CD4-positive, alpha-beta memory T cell (primary cell): ENCODE measurements at regions of chr6 and their contacts with region 1.

Region 1: DNA sequence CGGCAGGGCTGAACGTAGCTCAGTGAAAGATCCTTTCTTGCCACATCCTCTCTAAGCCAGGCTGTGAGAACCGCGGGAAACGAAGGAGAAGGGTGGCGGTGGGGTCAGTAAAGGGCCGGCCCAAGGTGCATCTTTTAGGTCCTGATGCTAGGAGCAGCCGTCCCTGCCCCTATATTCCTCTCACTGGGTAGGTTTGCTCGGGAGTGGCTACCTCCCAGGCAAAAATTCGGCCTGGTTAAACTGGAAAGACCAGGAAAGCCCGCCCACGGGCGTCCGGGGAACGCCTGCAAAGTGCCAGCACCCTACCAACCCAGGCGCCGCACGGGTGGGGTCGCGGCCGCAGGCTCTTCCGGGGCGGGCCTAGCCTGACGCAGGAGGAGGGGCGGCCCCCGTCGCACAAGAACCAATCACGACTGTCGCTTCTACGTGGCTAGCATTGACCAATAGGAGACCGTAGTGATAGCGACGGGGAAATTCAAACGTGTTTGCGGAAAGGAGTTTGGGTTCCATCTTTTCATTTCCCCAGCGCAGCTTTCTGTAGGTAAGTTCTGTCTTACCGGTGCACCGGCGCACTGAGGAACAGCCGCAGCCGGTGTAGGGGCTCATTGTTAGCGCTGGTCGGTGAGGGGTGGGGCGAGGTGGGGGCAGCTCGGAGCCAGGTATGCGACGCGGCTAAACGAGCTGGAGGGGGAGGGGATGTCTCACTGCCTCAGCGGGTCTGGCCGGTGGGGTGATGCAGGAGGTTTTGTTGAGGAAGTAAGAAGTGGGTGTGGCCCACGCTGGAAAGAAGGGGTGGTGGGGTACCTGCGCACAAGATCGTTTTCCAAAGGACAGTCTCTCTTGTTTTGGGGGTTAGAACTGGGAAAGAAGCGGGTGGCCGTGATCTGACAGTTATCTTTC is at the start of gene TTK:
- DNase-seq: peak; percentile 93 to 96 (median 94)
- H3K4me3 ChIP-seq: peak within 1 kb of the TSS; percentile 42 to 95
- H3K4me3 Mint-ChIP-seq: peak within 1 kb of the TSS; percentile 88 to 97 (median 94)
- H3K27ac ChIP-seq: peak within 1 kb of the TSS; percentile 81
- H3K27ac Mint-ChIP-seq: peak within 1 kb of the TSS; percentile 89 to 99 (median 98)
- H3K4me1 ChIP-seq: peaks cover 25% of the 10 kb centered on the region
- H3K4me1 Mint-ChIP-seq: peaks cover 15 to 25% (median 20%) of the 10 kb centered on the region in 4 donors
- H3K27me3 ChIP-seq: no peaks in the 10 kb centered on the region
- H3K27me3 Mint-ChIP-seq: peaks cover 2 to 3% of the 10 kb centered on the region in 2 donors
- total RNA-seq, gene TTK: 0.61 to 0.87 TPM

Region 2: DNA sequence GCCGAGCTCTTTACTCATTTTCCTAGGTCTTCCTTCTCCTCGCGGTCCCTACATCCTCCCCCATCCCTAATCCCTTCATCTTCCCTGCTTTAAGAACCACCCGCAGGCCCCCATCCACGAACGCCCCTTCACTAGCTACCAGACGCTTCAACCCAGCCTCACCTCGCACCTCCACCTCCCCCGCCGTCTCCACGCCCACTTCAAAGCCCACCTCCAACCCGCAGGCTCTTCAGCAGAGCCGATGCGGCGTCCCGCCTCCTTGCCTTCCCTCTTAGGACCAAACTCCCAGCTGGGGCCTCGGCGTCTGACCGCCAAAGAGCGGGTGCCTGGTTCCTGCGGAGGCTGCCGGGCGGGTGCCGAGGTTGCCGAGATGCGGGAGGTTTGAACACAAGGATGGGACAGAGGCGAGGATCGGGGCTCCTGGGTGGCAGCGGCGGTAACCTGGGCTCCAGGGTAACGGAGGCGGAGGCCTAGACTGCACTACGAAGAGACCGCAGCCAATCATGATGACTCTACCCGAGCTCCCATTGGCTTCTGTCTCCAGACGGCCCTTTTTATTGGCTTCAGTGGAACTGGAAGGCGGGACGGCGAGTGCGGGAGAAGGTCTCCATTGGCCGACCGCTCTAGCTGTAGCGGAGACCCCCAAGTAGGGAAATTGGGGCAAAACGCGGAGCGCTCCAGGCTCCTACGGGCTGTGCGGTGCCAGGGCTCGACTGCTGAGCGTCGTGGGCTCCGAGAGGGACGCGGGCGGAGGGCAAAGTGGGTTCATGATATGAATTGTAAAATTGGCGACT is 467.3 kb before region 1 on chr6 and contains the start of gene LCA5:
- CTCF ChIA-PET with region 1: no interaction called
- POLR2A ChIA-PET with region 1: no interaction called
- intact Hi-C with region 1: loop called (anchors 5 kb)
- DNase-seq: peak; percentile 73 to 85 (median 84)
- H3K4me3 ChIP-seq: peak within 1 kb of the TSS; percentile 25 to 44
- H3K4me3 Mint-ChIP-seq: no peak within 1 kb of the TSS
- H3K27ac ChIP-seq: no peak within 1 kb of the TSS
- H3K27ac Mint-ChIP-seq: no peak within 1 kb of the TSS
- H3K4me1 ChIP-seq: peaks cover 14% of the 10 kb centered on the region
- H3K4me1 Mint-ChIP-seq: peaks cover 0 to 4% (median under 1%) of the 10 kb centered on the region in 4 donors
- H3K27me3 ChIP-seq: no peaks in the 10 kb centered on the region
- H3K27me3 Mint-ChIP-seq: peaks cover 11 to 18% of the 10 kb centered on the region in 2 donors
- total RNA-seq, gene LCA5: 0.22 to 0.23 TPM

Region 3: DNA sequence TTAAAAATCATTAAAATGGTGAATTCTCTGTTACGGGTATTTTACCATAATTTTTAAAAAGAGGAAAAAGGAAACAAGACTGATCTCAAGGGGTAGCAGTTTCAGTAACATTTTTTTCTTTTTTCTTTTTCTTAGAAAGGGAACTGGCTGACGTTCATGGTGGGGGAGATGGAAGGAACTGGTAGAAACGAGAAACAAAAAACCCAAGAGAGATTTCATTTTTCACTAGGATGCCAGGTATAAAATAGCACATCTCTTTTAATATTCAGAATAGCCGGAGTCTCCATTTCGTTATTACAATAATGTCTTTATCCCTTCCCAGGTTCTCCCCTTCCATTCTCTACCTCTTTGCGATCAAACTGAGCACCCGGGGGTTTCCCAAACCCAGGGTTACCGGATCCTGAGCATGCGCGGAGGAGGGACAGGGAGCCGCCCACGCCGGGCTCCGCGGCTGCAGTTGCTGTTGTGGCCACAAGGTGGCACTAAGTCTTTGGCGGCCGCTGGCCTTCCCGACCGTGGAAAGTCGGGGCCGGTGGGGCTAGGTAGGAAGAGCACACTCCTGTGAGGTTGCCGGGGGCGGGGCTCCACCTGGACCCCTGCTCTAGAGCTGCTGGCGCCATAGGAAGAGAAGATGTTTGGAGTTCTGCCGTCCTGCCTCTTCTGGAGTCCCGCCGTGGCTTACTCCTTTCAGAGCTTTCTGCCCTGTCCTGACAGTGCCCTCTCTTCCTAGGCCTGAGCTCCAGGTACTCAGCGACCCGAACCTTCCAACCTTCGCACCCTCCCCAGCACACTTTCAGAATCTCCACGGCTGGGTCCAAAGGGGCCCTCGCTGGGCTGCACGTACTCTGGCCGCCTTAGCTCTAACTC is 226.5 kb before region 1 on chr6:
- CTCF ChIA-PET with region 1: no interaction called
- POLR2A ChIA-PET with region 1: no interaction called
- intact Hi-C with region 1: loop called (anchors 5 kb)
- DNase-seq: peak; percentile 79 to 82 (median 81)
- H3K4me3 ChIP-seq: peak overlapping the region; percentile 11 to 67
- H3K4me3 Mint-ChIP-seq: peak overlapping the region; percentile 79 to 87 (median 80)
- H3K27ac ChIP-seq: no peak overlapping the region
- H3K27ac Mint-ChIP-seq: peak overlapping the region in 6 of 7 donors; percentile 23 to 65 (median 58)
- H3K4me1 ChIP-seq: peaks cover 7% of the 10 kb centered on the region
- H3K4me1 Mint-ChIP-seq: peaks cover 4 to 11% (median 8%) of the 10 kb centered on the region in 4 donors
- H3K27me3 ChIP-seq: no peaks in the 10 kb centered on the region
- H3K27me3 Mint-ChIP-seq: no peaks in the 10 kb centered on the region

Region 4: GRCh38 chr6:79984261-79984660 is 20.2 kb before region 1 on chr6:
- CTCF ChIA-PET with region 1: interaction called, 4 read pairs
- POLR2A ChIA-PET with region 1: interaction called, 18 read pairs
- intact Hi-C with region 1: loop called (anchors 1 kb)
- DNase-seq: peak; percentile 28 to 50 (median 43)
- H3K4me3 ChIP-seq: no peak overlapping the region
- H3K4me3 Mint-ChIP-seq: peak overlapping the region in 4 of 8 donors; percentile 5 to 33 (median 20)
- H3K27ac ChIP-seq: no peak overlapping the region
- H3K27ac Mint-ChIP-seq: peak overlapping the region; percentile 3 to 69 (median 36)
- H3K4me1 ChIP-seq: peaks cover 25% of the 10 kb centered on the region
- H3K4me1 Mint-ChIP-seq: peaks cover 4 to 30% (median 14%) of the 10 kb centered on the region in 4 donors
- H3K27me3 ChIP-seq: no peaks in the 10 kb centered on the region
- H3K27me3 Mint-ChIP-seq: no peaks in the 10 kb centered on the region

Region 5: GRCh38 chr6:80106418-80107235 is 102.2 kb after region 1 on chr6 and contains the start of gene BCKDHB:
- CTCF ChIA-PET with region 1: interaction called, 3 read pairs
- POLR2A ChIA-PET with region 1: interaction called, 24 read pairs
- intact Hi-C with region 1: loop called (anchors 1 kb)
- DNase-seq: peak; percentile 98 to 99 (median 98)
- H3K4me3 ChIP-seq: peak within 1 kb of the TSS; percentile 52 to 54
- H3K4me3 Mint-ChIP-seq: peak within 1 kb of the TSS; percentile 87 to 95 (median 92)
- H3K27ac ChIP-seq: peak within 1 kb of the TSS; percentile 50
- H3K27ac Mint-ChIP-seq: peak within 1 kb of the TSS; percentile 76 to 95 (median 92)
- H3K4me1 ChIP-seq: peaks cover 16% of the 10 kb centered on the region
- H3K4me1 Mint-ChIP-seq: peaks cover 12 to 22% (median 18%) of the 10 kb centered on the region in 4 donors
- H3K27me3 ChIP-seq: no peaks in the 10 kb centered on the region
- H3K27me3 Mint-ChIP-seq: peaks cover 1 to 3% of the 10 kb centered on the region in 2 donors
- total RNA-seq, gene BCKDHB: 11.8 to 16.0 TPM